Cardiac septum (tissue), 1 donor: ENCODE measurements at regions of chr5 and their contacts with region 1.

Region 1: DNA sequence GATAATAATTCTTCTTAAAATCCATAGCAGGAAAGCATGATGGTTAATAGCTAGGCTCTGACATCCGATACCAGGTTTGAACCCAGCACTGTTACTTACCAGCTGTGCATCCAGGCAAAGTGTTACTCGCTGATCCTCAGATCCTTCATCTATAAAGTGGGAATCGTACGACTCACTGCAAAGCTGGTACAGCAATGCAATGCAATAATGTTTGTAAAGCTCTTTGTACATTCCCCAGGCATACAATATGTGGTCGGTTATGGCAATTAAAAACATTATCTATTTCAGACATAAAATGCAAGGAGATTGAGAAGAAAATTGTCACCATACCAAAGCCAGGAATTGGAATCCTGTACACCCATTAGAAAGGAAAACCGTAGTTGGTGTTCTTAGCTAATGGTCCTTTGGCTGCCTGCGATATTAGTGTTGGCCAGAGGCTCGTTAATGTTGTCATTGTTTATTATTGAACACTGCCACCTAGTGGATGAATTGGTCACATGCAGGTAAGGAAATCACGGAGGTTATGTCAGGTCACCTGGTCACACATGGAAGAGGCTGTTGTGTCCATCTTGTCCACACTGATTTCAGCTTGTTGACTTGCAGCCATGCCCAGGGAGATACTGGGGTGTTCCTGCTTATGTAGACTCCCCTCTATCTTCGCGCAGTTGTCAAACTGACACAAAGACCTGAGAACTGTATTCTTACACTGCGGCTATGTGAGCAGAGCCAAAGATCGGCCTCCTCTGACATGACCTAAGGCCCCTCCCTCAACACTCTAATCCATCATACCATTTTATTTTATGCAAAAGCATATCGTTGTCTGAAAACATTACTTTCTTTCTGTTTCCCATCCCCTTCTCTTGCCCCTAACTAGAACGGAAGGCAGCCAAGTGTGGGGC is 87.5 kb upstream of the PPP2R2B start:
- DNase-seq: no peak

Region 2: DNA sequence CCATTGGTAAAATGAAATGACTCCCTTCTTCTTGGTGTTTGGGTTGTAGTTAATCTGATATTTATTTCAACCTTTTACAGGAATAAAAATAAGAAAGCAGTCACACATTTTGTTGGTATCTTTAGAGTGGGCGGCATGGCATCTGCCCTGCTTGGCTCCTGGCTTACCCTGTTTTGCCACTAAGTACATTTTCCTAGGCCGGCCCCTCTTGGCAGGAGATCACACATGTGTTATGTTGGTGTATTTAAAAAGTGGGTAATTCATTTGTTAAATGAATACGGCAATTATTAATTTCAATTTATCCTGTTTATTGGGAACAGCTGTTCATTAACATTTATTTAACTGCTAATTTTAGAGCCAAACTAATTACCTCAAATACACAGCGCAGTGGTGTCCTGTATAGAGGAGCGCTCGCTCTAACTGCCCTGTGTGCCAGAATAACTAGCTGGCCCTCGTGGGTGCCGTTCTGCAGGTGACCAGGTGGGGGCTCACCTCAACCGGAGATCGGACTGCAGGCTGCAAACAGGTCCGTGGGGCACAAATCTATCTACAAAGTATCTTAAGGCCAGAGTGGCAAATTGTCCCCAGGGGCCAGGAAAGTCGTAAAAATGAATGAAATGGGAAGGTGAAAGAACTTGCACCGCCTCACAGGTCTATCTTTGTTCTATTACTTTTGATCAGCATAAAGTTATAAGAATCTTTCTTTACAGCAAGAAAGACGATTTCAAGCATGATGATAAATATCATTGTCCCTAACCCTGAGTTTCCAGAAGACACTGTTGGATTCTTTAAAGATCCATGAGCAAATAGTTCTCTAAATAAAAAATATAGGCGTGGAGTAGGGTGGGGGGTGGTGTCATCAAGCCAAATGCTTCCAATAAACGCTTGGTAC is 423.8 kb before region 1 on chr5:
- intact Hi-C with region 1: loop called (anchors 2 kb)
- DNase-seq: no peak

Region 3: GRCh38 chr5:146565764-146566367 is 400.1 kb before region 1 on chr5:
- intact Hi-C with region 1: loop called (anchors 2 kb)
- DNase-seq: no peak

Region 4: DNA sequence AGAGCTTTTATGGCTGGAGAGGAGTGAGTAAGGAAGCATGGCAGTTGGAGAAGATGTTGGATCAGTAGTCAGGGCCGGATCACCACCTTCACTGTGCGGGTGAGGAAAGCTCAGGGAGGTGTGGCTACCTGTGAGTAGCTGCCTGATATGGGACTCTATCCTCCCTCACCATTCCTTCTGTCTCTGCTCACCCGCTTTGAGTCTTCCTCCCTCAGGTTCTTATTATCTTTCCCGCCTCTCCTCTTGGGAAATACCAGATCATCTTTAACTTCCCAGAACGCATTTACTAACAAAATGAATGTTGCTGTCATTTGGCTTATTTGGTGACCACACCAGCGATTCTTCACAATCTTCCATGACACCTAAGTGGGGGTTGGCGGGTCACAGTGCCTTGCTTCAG is 309.3 kb before region 1 on chr5:
- intact Hi-C with region 1: loop called (anchors 5 kb)
- DNase-seq: no peak